Transverse colon (tissue), 4 donors: ENCODE measurements at regions of chr20 and their contacts with region 1.

Region 1: DNA sequence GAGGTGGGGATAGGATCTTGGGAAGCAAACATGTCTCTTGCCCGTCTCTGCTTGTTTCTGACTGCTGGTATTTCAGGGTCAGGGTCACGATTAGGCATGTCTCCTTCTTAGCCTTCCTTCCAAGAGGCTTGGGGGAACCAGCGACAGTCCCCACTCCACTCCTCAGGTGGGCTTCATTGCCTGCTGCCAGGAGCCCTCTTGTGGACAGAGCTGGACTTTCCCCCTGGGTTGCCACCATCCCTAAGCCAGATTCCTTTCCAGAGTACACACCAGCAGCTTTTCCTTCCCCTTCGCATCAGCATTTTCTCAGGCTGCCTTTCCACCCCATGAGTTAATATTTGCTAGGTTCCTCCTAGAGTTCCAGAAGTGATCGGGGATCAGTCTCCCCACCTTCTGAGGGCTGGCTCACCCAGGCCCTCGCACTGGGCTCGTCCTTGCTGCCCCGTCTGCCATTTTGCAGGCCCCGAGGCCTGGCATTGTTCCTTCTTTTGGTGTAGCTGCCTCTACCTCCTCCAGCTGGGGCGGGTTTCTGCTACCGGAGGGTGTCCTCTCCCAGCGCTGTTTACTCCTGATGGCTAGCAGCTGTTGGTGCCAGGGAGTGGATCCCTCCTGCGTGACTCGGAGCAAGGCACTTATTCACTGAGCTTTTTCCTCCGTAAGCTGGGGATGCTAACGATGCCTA is 8.8 kb upstream of the C20orf144 start:
- DNase-seq: peak; percentile 64
- H3K4me3 ChIP-seq: no peak overlapping the region
- H3K27ac ChIP-seq: peak overlapping the region; percentile 36 to 74 (median 54)
- H3K4me1 ChIP-seq: peaks cover 17 to 45% (median 22%) of the 10 kb centered on the region in 4 donors
- H3K27me3 ChIP-seq: no peaks in the 10 kb centered on the region
- CTCF ChIP-seq: peak; percentile 71 to 81 (median 76)
- EP300 ChIP-seq: no peak
- POLR2A ChIP-seq: no peak

Region 2: DNA sequence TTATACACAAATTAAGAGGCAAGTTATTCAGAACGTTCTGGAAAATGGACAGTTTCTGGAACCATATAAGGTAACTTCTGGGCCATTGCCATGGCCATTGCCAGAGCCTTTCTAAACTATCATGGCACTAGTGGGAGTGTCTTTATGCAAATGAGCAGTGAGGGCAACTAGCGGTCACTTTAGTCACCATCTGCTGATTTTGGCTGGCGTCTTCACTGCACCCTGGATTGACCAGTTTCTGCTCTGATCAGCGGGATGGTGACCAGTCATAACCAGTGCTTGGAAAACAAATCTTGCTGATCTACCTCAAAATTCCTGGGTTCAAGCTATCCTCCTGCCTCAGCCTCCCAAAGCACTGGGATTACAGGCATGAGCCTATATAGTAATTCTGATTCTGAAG is 202.5 kb before region 1 on chr20:
- in situ Hi-C with region 1: loop called in 3 of 4 experiments (anchors 5 to 10 kb)
- intact Hi-C with region 1: no loop called
- DNase-seq: no peak
- H3K4me3 ChIP-seq: no peak overlapping the region
- H3K27ac ChIP-seq: no peak overlapping the region
- H3K4me1 ChIP-seq: no peaks in the 10 kb centered on the region
- H3K27me3 ChIP-seq: no peaks in the 10 kb centered on the region
- CTCF ChIP-seq: no peak
- EP300 ChIP-seq: no peak
- POLR2A ChIP-seq: no peak

Region 3: GRCh38 chr20:33459599-33459998 is 193.8 kb before region 1 on chr20:
- in situ Hi-C with region 1: loop called (anchors 5 to 10 kb)
- intact Hi-C with region 1: loop called (anchors 2 kb)
- DNase-seq: no peak
- H3K4me3 ChIP-seq: no peak overlapping the region
- H3K27ac ChIP-seq: no peak overlapping the region
- H3K4me1 ChIP-seq: peaks cover 0 to 9% (median 3%) of the 10 kb centered on the region in 4 donors
- H3K27me3 ChIP-seq: no peaks in the 10 kb centered on the region
- CTCF ChIP-seq: no peak
- EP300 ChIP-seq: no peak
- POLR2A ChIP-seq: no peak

Region 4: DNA sequence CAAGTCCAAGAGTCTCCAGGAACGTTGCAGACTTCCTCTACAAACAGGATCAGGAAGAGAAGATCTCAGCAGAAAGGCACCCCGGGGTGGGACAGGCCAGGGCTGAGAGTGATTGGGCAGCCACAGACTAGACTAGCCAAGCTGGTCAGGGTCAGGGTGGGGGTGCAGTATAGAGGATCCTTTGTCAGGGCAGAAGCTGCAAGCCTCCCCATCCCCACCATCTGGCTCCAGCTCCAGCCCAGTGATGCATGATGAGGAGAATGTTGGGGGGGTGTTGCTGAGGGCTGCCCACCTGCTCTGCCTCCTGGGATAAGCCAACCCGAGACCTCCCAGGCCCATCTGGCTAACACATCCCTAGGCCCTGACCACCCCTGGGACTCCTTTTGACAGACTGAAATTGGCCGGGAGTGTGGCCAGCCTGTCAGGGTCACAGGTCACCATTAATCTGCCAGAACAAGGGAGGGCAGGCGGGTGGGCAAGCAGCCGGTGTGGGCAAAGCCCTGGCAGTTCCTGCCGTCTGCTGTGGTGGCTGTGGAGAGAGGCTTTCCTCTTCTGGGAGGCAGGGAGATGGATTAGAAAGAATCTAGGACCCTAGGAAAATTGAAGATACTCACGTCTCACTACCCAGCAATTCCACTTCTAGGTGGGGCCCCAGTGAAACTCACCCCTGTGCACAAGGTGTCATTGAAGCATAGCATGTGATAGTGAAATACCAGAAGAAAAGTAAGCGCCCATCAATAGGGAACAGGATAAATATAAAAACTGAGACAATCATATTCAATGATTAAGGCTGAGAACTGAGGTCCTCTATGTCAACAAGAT is 187.7 kb before region 1 on chr20:
- in situ Hi-C with region 1: loop called in 1 of 4 experiments (anchors 10 kb)
- intact Hi-C with region 1: no loop called
- DNase-seq: no peak
- H3K4me3 ChIP-seq: no peak overlapping the region
- H3K27ac ChIP-seq: no peak overlapping the region
- H3K4me1 ChIP-seq: peaks cover 0 to 3% (median 0%) of the 10 kb centered on the region in 4 donors
- H3K27me3 ChIP-seq: no peaks in the 10 kb centered on the region
- CTCF ChIP-seq: no peak
- EP300 ChIP-seq: no peak
- POLR2A ChIP-seq: no peak

Region 5: DNA sequence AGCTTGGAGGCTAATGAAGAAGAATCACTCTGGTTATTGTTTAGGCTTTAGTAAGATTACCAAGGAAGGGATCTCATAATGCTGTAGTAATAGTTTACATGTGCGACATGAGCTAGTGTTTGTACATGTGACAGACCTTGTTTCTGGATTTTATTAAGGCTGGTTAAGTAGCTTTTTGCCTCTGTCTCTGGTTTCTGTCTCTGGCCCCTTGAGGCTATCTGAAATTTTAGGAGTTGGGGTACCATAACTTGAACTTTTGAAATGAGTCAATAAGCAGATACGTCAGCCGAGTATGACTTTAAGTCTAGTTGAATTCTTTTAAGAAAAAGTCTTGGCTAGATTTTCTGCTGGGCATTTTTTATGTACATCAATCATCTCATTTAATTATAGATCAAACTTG is 154.0 kb before region 1 on chr20:
- in situ Hi-C with region 1: no loop called
- intact Hi-C with region 1: no loop called
- DNase-seq: no peak
- H3K4me3 ChIP-seq: no peak overlapping the region
- H3K27ac ChIP-seq: no peak overlapping the region
- H3K4me1 ChIP-seq: peaks cover 0 to 33% (median 8%) of the 10 kb centered on the region in 4 donors
- H3K27me3 ChIP-seq: no peaks in the 10 kb centered on the region
- CTCF ChIP-seq: no peak
- EP300 ChIP-seq: no peak
- POLR2A ChIP-seq: no peak